PC-3 (cell line): ENCODE measurements at regions of chr12 and their contacts with region 1.

Region 1: GRCh38 chr12:120528861-120529525 is at the start of gene COQ5:
- DNase-seq: peak; percentile 87
- ATAC-seq: peak; percentile 63
- H3K4me3 ChIP-seq: peak within 1 kb of the TSS; percentile 98
- H3K27ac ChIP-seq: peak within 1 kb of the TSS; percentile 86
- H3K4me1 ChIP-seq: peaks cover 39% of the 10 kb centered on the region
- H3K27me3 ChIP-seq: no peaks in the 10 kb centered on the region
- CTCF ChIP-seq: no peak
- total RNA-seq, gene COQ5: 40.4 and 41.2 TPM in 2 replicates

Region 2: DNA sequence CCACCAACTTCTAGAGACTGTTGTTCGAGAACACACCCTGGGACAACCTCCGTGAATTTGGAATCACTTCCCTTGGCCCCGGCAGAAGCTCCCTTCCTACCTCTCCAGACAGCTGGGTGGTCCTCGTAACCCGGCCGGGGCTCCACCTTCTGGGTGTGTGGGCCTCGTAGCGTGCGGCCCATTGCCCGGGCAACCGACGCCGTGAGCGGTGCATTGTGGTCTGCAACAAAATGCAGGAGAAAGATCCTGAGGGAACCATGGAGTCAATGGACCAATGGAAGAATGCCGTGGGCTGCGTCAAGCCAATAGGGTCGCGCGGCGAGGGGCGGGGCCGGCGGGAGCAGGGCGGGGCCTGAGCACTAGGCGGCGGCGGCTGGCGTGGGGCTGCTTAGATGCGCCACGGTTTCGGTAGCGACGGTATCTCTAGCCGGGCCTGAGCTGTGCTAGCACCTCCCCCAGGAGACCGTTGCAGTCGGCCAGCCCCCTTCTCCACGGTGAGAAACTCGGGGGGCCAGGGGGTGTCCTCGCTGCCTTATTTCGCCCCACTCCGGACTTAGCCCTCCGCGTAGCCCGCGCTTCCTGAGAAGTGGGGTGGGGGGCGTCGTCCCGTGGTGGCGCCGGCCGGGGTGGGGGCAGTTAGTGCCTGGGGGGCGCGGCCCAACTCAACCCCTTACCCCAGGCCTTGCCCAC is 33.1 kb before region 1 on chr12 and contains the start of gene DYNLL1:
- CTCF ChIA-PET with region 1: no interaction called
- POLR2A ChIA-PET with region 1: no interaction called
- intact Hi-C with region 1: loop called (anchors 1 kb)
- DNase-seq: peak; percentile 99
- ATAC-seq: peak; percentile 92
- H3K4me3 ChIP-seq: peak within 1 kb of the TSS; percentile 95
- H3K27ac ChIP-seq: peak within 1 kb of the TSS; percentile 54
- H3K4me1 ChIP-seq: peaks cover 24% of the 10 kb centered on the region
- H3K27me3 ChIP-seq: no peaks in the 10 kb centered on the region
- CTCF ChIP-seq: no peak
- total RNA-seq, gene DYNLL1: 283 and 396 TPM in 2 replicates

Region 3: DNA sequence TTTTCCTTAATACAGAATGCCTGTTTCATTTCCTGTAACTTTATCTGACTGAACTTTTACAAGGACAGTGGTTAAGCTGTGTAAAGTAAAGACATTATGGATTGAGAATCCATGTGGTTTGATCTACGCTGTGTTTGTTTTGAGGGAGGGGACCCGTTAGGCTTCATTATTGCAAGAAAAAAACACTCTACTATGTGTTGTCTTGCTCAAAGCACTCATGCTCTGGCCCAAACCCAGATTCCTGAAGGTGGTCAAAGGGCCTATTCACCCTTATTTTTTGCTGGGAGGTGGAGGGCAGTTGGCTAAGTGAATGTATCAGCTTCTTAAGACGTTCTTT is 17.0 kb after region 1 on chr12:
- CTCF ChIA-PET with region 1: no interaction called
- POLR2A ChIA-PET with region 1: interaction called, 6 read pairs
- intact Hi-C with region 1: loop called (anchors 1 kb)
- DNase-seq: peak; percentile 88
- ATAC-seq: peak; percentile 87
- H3K4me3 ChIP-seq: peak overlapping the region; percentile 58
- H3K27ac ChIP-seq: peak overlapping the region; percentile 94
- H3K4me1 ChIP-seq: peaks cover 36% of the 10 kb centered on the region
- H3K27me3 ChIP-seq: no peaks in the 10 kb centered on the region
- CTCF ChIP-seq: no peak